ENCODE measurements at regions of chr4 and their contacts with region 1.

Region 1: DNA sequence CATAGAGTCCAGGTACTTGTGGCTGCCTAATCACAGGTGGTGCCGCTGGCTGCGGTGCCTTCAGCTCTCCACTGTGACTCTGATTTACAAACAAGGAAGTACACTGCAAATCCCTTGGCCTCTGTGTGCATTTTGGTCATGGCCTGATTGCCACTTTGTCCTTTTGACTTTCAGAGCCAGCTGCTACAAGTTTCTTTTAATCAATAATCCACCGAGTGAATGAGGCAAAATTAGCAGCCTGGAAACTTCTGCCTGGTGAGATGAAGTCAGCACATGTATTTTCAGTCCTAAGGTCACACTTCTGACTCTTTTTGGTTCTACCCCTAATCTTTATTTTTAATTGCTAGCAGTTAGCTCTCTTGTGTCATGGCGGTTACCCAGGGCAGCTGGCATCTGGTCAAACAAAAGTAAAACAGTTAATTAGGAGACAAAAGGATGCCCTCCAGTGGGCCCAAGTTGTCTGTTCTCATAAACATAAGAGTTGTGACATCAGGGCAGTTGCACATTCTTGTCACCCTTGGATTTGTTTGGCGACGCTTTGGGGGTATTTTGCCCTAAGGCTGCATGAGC is 62.3 kb upstream of the LNX1 start:
- DNase-seq: no peak
- ATAC-seq: no peak

Region 2: DNA sequence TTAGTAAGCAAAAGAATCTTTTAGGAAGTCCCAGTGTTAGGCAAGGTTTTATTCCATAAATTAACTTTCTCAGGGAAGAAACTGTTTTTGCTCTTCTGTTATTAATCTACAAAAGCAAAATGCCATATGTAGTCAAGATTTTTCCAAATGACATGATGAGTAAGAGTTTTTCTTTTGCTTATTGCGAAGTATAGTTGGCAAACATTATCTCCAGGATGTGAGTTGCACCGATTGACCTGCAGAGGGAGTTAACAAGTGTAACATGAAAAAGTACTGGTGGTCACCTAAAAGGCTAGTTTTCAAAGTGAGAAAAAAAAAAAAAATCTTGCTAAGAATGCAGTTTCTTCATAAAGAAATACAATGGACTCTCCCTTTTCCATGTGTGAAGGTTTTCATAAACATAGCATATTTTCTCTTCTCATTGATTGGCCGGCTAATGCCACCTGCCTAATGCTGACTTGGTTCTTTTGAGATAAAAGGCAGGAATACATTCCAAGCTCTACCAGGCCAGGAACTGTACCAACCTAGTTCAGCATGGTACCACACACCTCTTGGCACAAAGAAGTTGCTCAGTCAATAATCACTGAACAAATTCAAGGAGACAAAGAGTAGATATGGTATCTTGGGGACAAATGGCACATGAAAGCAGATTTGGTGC is 162.5 kb before region 1 on chr4:
- intact Hi-C with region 1: loop called (anchors 5 kb)
- DNase-seq: no peak
- ATAC-seq: peak; percentile 53

Region 3: DNA sequence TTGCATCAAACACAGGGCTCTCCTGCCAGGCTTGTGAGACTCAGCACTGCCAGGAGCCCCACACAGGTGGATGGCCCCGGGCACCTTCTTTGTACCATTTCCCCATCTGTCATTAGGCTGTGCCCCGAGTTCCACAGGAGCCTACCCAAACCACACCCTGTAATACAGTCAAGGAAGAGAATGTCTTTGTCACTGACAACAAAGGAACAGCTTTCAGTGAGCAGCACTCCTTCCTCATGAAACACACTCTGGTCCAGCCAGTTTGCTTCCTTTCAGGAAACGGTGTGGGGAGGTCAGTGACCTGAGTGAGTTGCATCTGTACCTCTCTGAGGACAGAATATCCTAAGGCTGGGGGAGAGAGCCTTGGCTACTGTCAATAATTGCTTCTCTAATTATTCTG is 116.0 kb before region 1 on chr4:
- intact Hi-C with region 1: loop called (anchors 2 kb)
- DNase-seq: no peak
- ATAC-seq: no peak

Region 4: GRCh38 chr4:54645830-54646229 is 992.3 kb after region 1 on chr4:
- intact Hi-C with region 1: no loop called
- DNase-seq: no peak
- ATAC-seq: no peak